Breast epithelium (tissue), 4 donors: ENCODE measurements at regions of chr16 and their contacts with region 1.

Region 1: GRCh38 chr16:67928561-67929364 is 2.9 kb downstream of the CTRL start:
- DNase-seq: peak in 1 of 2 donors; percentile 69
- H3K4me3 ChIP-seq: no peak overlapping the region
- H3K27ac ChIP-seq: no peak overlapping the region
- H3K4me1 ChIP-seq: peaks cover 0 to 3% of the 10 kb centered on the region in 2 donors
- H3K27me3 ChIP-seq: no peaks in the 10 kb centered on the region
- CTCF ChIP-seq: peak; percentile 27 to 85 (median 82)
- POLR2A ChIP-seq: no peak

Region 2: DNA sequence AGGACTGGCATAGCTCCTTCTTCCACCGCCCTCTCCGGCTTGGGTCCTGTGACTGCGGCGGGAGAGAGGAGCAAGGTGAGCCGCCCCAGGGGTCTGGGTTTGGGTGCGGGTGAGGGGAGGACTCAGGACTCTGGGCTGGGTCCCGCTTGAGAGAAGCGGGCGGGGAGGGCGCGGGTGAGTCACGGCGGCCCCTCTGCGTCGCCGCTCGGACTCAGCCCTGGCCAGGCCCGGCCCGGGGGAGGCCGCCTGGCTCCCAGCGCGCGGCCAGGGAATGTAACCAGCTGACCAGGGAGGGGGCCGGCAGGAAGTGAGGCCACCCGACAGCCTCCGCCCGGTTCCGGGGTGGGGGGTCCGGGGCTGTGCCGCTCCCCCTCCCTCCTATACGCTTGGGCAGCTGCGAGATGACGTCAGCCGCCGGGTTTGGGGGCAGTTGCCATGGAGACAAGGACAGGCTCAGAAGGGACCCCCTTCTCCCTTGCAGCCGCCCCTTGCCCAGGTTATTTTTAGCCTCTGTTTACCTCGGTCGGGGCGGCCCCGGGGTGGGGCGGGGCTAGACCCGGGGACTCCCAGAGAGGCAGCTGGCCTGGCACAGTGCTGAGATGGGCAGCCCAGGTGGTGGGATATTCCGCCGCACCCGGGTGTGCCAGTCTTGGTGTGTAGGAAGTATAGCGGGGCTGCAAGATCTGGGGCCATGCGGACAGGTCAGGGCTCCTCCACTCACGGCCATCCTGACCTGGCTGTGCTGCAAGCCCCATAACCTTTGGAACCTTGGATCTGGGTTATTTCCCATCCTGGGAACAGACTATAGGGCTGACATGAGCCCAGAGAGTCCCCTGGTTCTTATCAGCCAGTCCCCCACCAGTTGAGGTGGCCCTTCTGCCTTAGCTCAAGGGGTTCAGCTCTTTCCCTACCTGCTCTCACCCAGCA is 398.5 kb before region 1 on chr16:
- intact Hi-C with region 1: loop called (anchors 10 kb)
- DNase-seq: peak in 1 of 2 donors; percentile 57
- H3K4me3 ChIP-seq: peak overlapping the region; percentile 81 to 90 (median 85)
- H3K27ac ChIP-seq: peak overlapping the region; percentile 75 to 91
- H3K4me1 ChIP-seq: peaks cover 0 to 8% of the 10 kb centered on the region in 2 donors
- H3K27me3 ChIP-seq: no peaks in the 10 kb centered on the region
- CTCF ChIP-seq: no peak
- POLR2A ChIP-seq: no peak

Region 3: GRCh38 chr16:67551965-67552364 is 376.8 kb before region 1 on chr16:
- intact Hi-C with region 1: loop called (anchors 2 kb)
- DNase-seq: no peak
- H3K4me3 ChIP-seq: no peak overlapping the region
- H3K27ac ChIP-seq: no peak overlapping the region
- H3K4me1 ChIP-seq: no peaks in the 10 kb centered on the region
- H3K27me3 ChIP-seq: no peaks in the 10 kb centered on the region
- CTCF ChIP-seq: no peak
- POLR2A ChIP-seq: no peak

Region 4: DNA sequence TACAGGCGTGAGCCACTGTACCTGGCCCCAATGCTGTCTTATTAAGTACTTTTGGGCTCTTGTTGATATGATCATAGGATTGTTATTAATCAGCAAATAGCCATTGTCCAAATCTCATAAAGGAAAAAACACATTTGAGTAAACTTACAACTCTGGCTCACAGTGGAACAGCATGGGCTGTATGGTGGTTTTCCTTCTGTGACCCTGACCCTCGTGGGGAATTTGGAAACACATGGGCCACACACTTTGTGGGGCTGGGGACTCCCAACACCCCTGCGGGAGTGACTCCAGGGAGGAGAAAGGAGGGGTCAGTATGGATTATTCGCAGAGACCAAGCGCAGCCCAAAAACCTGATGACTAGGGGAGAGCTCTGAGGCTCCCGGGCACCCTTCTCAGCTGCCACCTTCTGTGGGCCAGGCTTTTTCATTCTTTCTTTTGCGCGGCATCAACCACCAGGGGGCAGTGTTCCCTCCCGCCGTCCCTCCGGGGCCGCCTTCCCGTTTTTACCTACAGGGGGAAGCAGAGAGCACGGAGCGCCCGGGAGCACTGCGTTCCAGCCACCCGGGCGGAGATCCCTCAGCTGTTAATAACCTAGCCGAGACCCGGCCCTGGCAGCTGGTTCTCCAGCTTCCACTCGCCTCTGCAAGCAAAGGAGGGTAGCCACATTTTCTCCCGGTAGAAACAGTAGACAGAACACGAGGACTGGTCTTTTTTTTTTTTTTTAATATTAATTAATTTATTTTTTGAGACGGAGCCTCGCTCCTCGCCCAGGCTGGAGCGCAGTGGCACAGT is 112.3 kb before region 1 on chr16:
- intact Hi-C with region 1: loop called (anchors 1 kb)
- DNase-seq: peak; percentile 57 to 90
- H3K4me3 ChIP-seq: peak overlapping the region in 1 of 3 donors; percentile 13
- H3K27ac ChIP-seq: no peak overlapping the region
- H3K4me1 ChIP-seq: no peaks in the 10 kb centered on the region
- H3K27me3 ChIP-seq: no peaks in the 10 kb centered on the region
- CTCF ChIP-seq: peak; percentile 98 to 100 (median 99)
- POLR2A ChIP-seq: no peak